ENCODE measurements at regions of chr13 and their contacts with region 1.

Region 1: GRCh38 chr13:109145631-109146030 is 516.2 kb downstream of the MYO16 start:
- DNase-seq: peak; percentile 72
- H3K4me3 Mint-ChIP-seq: no peak overlapping the region
- H3K27ac Mint-ChIP-seq: no peak overlapping the region
- H3K4me1 Mint-ChIP-seq: peaks cover 30% of the 10 kb centered on the region
- H3K27me3 Mint-ChIP-seq: no peaks in the 10 kb centered on the region
- CTCF ChIP-seq: peak; percentile 76

Region 2: DNA sequence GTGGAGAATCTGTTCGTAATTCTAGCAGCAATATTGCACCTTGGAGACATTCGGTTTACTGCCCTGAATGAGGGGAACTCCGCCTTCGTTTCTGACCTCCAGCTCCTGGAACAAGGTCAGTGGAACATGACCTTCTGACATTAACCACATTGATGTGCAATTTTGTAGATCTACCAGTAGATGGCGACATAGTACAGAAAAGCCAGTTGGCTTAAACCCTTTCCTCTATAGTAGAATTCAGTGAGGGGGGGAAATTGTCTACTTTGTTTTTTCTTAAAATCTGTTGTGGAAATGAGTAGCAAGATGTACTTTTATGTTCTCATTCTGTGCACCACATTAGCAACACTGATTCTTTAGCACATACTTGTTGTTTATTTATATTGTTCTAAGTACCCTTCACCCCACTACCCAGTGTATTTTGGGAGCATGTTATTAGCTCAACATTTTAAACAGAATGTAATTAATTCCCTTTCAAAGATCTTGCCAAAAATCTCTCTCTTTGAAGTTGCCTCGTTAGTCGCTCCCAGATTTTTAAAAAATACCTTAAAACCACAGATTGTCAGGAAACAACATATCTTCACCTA is 184.0 kb before region 1 on chr13:
- CTCF ChIA-PET with region 1: interaction called, 10 read pairs
- POLR2A ChIA-PET with region 1: interaction called, 9 read pairs
- intact Hi-C with region 1: loop called (anchors 1 kb)
- DNase-seq: peak; percentile 57
- H3K4me3 Mint-ChIP-seq: no peak overlapping the region
- H3K27ac Mint-ChIP-seq: no peak overlapping the region
- H3K4me1 Mint-ChIP-seq: peaks cover 43% of the 10 kb centered on the region
- H3K27me3 Mint-ChIP-seq: no peaks in the 10 kb centered on the region
- CTCF ChIP-seq: peak; percentile 79

Region 3: GRCh38 chr13:109196948-109197347 is 51.3 kb after region 1 on chr13:
- CTCF ChIA-PET with region 1: interaction called, 5 read pairs
- POLR2A ChIA-PET with region 1: interaction called, 13 read pairs
- intact Hi-C with region 1: no loop called
- DNase-seq: no peak
- H3K4me3 Mint-ChIP-seq: no peak overlapping the region
- H3K27ac Mint-ChIP-seq: no peak overlapping the region
- H3K4me1 Mint-ChIP-seq: peaks cover 6% of the 10 kb centered on the region
- H3K27me3 Mint-ChIP-seq: no peaks in the 10 kb centered on the region
- CTCF ChIP-seq: no peak

Region 4: DNA sequence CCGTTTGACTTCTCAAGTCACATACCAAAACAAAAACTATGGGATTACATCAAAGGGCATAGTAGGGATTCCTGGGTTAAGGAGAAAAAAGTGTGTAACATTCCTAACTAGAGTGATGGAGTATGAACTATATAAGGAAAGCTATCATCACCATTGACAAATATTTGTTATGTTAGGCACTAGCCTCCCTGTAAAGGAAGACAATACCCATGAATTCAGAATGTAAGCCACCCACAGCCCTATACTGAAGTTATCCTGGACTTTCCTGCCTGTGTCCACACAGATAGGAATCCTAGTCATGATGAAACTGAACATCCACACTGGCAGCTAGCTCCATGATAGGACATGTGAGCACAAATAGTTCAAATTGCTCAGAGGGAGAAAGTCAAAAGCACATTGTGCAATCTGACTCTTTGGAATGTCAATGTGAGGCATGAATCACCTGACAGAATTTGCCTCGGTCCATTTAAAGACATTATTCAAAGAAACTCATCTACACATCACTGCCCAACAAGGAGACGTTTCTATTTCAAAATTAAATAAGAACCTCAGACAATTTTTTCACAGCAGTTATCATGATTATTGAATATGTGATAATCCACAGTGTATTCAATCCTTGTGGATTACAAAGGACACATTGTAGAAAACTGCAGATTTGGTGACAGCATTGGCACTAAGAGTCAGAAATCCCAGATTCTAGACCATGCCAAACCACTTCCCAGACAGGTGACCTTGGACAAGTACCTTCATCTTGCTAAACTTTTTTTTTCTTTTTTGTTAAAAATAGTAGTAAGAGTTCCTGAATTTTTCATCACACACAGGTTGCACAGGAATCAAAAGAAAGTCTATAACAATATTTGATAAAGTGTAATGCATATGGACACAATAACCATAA is 111.5 kb after region 1 on chr13:
- CTCF ChIA-PET with region 1: interaction called, 8 read pairs
- POLR2A ChIA-PET with region 1: interaction called, 23 read pairs
- intact Hi-C with region 1: loop called (anchors 5 kb)
- DNase-seq: peak; percentile 99
- H3K4me3 Mint-ChIP-seq: peak overlapping the region; percentile 48
- H3K27ac Mint-ChIP-seq: peak overlapping the region; percentile 96
- H3K4me1 Mint-ChIP-seq: peaks cover 47% of the 10 kb centered on the region
- H3K27me3 Mint-ChIP-seq: no peaks in the 10 kb centered on the region
- CTCF ChIP-seq: no peak

Region 5: DNA sequence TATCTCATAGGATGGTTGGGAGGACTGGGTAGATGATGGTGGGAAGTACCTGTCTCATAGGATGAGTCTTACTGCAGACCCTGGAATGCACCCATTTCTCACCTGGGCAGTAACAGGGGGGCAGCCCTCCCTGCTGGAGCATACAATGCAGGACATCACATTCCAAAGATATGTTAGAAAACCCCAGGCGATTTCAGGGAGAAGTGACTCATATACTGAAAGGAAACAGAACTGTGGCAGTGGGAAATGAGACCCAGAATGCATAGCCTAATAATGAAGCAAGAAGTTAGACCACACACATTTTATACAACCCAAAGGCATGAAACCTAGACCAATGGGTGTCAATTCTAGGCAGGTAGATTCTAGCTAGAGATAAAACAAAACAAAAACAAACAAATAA is 238.0 kb after region 1 on chr13:
- CTCF ChIA-PET with region 1: no interaction called
- POLR2A ChIA-PET with region 1: interaction called, 4 read pairs
- intact Hi-C with region 1: loop called (anchors 5 kb)
- DNase-seq: peak; percentile 82
- H3K4me3 Mint-ChIP-seq: no peak overlapping the region
- H3K27ac Mint-ChIP-seq: peak overlapping the region; percentile 85
- H3K4me1 Mint-ChIP-seq: peaks cover 26% of the 10 kb centered on the region
- H3K27me3 Mint-ChIP-seq: no peaks in the 10 kb centered on the region
- CTCF ChIP-seq: no peak

Region 6: DNA sequence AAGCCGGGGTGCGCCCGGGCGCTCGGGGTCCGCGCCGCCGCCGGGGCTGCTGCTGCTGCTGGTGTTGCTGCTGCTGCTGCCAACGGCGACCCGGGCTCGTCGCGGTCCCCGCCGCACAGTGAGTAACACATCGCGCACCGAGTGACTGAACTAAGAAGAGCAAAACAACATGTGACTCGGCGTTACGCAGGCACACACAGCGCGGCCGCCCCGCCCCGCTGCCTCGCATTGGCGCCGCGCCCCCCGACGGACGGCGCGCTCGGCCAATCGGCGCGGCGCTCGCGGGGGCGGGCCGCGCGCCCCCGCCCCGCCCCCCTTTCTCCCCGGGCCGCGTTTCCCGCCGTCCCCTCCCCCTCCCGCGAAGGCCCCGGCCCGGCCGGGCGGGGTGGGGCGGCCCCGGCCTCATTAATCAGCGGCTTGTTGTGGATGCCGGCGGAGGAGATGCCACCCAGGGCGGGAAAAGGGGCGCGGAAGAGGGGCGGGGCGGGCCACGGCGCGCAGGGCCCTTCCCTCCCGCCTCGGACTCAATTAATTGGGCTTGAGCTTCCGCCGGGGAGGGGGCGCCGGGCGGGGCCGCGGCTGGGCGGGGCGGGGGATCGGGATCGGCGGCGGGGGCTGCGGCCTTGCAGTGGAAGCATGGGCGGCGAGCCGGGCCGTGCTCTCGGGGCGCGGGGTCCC is 641.0 kb after region 1 on chr13 and contains the start of gene IRS2:
- CTCF ChIA-PET with region 1: interaction called, 30 read pairs
- POLR2A ChIA-PET with region 1: interaction called, 49 read pairs
- intact Hi-C with region 1: loop called (anchors 2 kb)
- DNase-seq: peak; percentile 92
- H3K4me3 Mint-ChIP-seq: peak within 1 kb of the TSS; percentile 84
- H3K27ac Mint-ChIP-seq: peak within 1 kb of the TSS; percentile 31
- H3K4me1 Mint-ChIP-seq: peaks cover 33% of the 10 kb centered on the region
- H3K27me3 Mint-ChIP-seq: no peaks in the 10 kb centered on the region
- CTCF ChIP-seq: no peak
- total RNA-seq, gene IRS2: 41.8 and 48.5 TPM in 2 replicates

Region 7: GRCh38 chr13:110108347-110109174 is 962.9 kb after region 1 on chr13:
- CTCF ChIA-PET with region 1: interaction called, 6 read pairs
- POLR2A ChIA-PET with region 1: interaction called, 4 read pairs
- intact Hi-C with region 1: loop called (anchors 1 kb)
- DNase-seq: peak; percentile 87
- H3K4me3 Mint-ChIP-seq: no peak overlapping the region
- H3K27ac Mint-ChIP-seq: no peak overlapping the region
- H3K4me1 Mint-ChIP-seq: peaks cover 37% of the 10 kb centered on the region
- H3K27me3 Mint-ChIP-seq: no peaks in the 10 kb centered on the region
- CTCF ChIP-seq: peak; percentile 84

Measured in MCF 10A (cell line).